ENCODE measurements at regions of chr19 and their contacts with region 1.

Region 1: DNA sequence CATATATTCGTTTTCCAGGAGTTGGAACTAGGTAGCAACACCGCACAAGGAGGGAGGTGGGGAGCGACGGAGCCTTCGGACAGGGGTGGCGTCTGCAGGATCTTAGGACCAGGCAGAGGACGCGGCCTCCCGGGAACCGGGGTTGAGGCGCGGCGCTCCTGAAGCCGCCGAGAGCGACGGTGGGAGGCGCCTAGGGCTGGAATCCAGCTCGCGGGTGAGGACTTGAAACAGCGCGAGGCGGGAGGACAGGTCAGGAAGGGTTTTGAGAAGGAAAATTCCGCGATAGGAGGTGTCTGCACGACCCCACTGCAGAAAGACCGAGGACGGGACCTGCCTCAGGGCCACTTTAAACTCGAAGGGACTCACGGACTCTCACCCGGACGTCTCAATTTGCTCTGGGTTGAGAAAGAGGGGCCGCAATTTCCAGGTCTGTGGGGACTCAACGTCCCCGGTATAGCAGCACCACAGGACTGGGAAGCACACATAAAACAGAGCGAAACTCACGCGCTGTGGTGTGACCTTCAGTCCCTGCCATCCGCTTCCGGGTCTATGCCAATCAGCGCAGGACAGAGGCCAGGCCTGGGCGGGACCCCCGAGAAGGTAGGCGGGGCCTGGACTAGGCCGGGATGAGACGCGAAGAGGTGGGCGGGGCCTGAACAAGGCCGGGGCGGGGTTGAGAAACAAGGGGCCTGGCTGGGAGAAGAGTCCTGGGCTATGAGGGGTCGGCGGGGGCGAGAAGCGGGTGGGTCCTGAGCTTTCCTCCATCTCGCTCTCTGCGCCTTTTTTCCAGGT is at the start of gene ZNF320:
- DNase-seq: peak; percentile 95
- H3K4me3 Mint-ChIP-seq: peak within 1 kb of the TSS; percentile 84
- H3K27ac Mint-ChIP-seq: peak within 1 kb of the TSS; percentile 89
- H3K4me1 Mint-ChIP-seq: peaks cover 7% of the 10 kb centered on the region
- H3K27me3 Mint-ChIP-seq: no peaks in the 10 kb centered on the region
- total RNA-seq, gene ZNF320: 4.2 to 4.6 TPM

Region 2: GRCh38 chr19:52823676-52824075 is 73.7 kb before region 1 on chr19:
- CTCF ChIA-PET with region 1: no interaction called
- intact Hi-C with region 1: loop called (anchors 2 kb)
- DNase-seq: no peak
- H3K4me3 Mint-ChIP-seq: no peak overlapping the region
- H3K27ac Mint-ChIP-seq: no peak overlapping the region
- H3K4me1 Mint-ChIP-seq: peaks cover 10% of the 10 kb centered on the region
- H3K27me3 Mint-ChIP-seq: no peaks in the 10 kb centered on the region

Region 3: GRCh38 chr19:52922841-52923777 is 25.8 kb after region 1 on chr19 and contains the start of gene ZNF888:
- CTCF ChIA-PET with region 1: no interaction called
- intact Hi-C with region 1: loop called (anchors 2 kb)
- DNase-seq: peak; percentile 92
- H3K4me3 Mint-ChIP-seq: peak within 1 kb of the TSS; percentile 91
- H3K27ac Mint-ChIP-seq: peak within 1 kb of the TSS; percentile 85
- H3K4me1 Mint-ChIP-seq: peaks cover 18% of the 10 kb centered on the region
- H3K27me3 Mint-ChIP-seq: peaks cover 4% of the 10 kb centered on the region
- total RNA-seq, gene ZNF888: 4.1 to 4.3 TPM

Region 4: DNA sequence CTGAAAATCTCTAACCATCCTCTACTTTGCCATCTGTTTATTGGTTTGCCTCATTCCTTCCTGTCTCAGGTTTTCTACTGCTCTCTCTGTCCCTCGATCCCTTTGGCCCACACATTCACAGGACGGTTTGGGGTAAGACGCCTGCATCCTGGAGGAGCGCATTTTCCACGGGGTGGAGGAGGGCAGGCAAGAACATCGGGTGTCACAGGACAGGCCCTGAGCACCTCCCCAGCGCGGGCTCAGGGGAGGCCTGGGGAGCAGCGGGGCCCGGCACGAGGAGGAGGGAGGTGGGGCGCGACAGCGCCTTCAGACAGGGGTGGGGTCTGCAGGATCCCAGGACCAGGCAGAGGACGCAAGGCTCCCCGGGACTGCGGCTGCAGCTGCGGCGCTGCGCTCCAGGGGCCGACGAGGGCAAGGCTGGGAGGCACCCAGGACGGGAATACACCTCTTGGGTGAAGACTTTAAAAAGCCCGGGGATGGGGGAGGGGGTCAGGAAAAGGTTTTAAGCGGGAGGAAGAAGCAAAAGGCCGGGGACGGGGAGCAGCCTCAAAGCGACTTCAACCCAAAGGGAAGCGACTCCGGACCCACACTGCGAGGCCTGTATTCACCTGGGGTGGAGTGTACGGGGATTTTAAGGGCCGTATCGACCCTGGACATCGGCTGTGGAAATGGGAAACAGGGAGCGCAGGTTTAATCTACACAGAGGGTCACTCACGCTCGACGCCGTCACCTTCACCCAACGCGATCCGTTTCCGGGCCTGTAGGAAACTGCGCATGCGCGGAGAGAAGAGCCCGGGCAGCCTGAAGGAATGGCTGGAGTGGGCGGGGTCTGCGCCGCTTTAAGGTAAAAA is 235.0 kb after region 1 on chr19 and contains the start of gene ZNF415:
- CTCF ChIA-PET with region 1: no interaction called
- intact Hi-C with region 1: no loop called
- DNase-seq: peak; percentile 63
- H3K4me3 Mint-ChIP-seq: peak within 1 kb of the TSS; percentile 62
- H3K27ac Mint-ChIP-seq: no peak within 1 kb of the TSS
- H3K4me1 Mint-ChIP-seq: peaks cover 9% of the 10 kb centered on the region
- H3K27me3 Mint-ChIP-seq: peaks cover 13% of the 10 kb centered on the region
- total RNA-seq, gene ZNF415: 0.74 to 1.0 TPM

Region 5: DNA sequence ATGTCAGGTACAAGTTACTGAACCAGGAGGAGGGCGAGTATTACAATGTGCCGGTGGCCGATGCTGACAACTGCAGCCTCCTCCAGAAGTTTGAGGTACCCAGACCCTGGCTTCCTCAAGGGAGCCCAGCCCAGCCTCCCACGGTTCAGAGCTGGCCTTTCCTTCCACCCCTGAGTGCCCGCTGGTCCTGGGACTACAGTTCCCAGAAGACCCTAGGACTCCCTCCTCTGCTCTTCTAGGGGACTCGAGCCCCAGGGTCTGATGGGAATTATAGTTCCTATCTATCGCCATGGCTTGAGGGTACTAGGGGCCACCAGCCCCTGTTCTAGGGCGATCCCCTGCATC is 995.6 kb after region 1 on chr19:
- CTCF ChIA-PET with region 1: no interaction called
- intact Hi-C with region 1: no loop called
- DNase-seq: no peak
- H3K4me3 Mint-ChIP-seq: no peak overlapping the region
- H3K27ac Mint-ChIP-seq: no peak overlapping the region
- H3K4me1 Mint-ChIP-seq: no peaks in the 10 kb centered on the region
- H3K27me3 Mint-ChIP-seq: peaks cover 41% of the 10 kb centered on the region